Activated CD4-positive, alpha-beta memory T cell treated with anti-CD3 and anti-CD28 coated beads, Interleukin-2, amount 10 ng/mL, durations not matched to agents 7 days and 5 days (primary cell): ENCODE measurements at regions of chr9 and their contacts with region 1.

Region 1: GRCh38 chr9:108953983-108954574 is 19.9 kb downstream of the ABITRAM start:
- DNase-seq: no peak
- H3K4me3 Mint-ChIP-seq: no peak overlapping the region
- H3K27ac Mint-ChIP-seq: no peak overlapping the region
- H3K4me1 Mint-ChIP-seq: peaks cover 1% of the 10 kb centered on the region
- H3K27me3 Mint-ChIP-seq: no peaks in the 10 kb centered on the region

Region 2: DNA sequence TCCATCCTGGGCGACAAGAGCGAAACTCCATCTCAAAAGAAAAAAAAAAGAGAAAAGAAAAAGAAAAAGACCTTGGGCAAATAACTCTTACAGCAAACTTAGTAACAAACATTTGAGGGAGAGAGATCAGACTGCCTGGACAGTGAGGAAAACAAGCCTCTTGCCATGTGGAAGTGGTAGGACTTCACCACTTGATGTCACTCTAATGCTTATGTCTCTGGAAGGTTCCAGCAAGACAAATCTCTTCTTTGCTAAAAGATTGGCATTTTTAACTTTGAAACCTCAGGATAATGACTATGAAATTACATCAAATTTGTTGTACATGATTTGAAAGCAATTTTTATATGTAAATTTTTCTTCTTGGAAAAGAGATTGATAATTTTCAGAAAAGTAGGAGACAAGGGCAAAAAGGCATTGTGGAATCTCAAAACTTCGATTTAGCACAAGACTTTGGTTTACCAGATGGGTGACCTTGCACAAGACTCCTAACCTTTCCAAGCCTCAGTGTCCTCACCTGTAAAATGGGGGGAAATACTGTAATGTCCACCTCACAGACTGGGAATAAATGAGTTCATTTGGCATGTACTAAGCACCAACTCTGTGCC is 103.7 kb before region 1 on chr9:
- CTCF ChIA-PET with region 1: interaction called, 10 read pairs
- POLR2A ChIA-PET with region 1: no interaction called
- DNase-seq: no peak
- H3K4me3 Mint-ChIP-seq: no peak overlapping the region
- H3K27ac Mint-ChIP-seq: no peak overlapping the region
- H3K4me1 Mint-ChIP-seq: no peaks in the 10 kb centered on the region
- H3K27me3 Mint-ChIP-seq: peaks cover 5% of the 10 kb centered on the region

Region 3: GRCh38 chr9:109244157-109245132 is 290.4 kb after region 1 on chr9:
- CTCF ChIA-PET with region 1: no interaction called
- POLR2A ChIA-PET with region 1: no interaction called
- DNase-seq: peak; percentile 67
- H3K4me3 Mint-ChIP-seq: no peak overlapping the region
- H3K27ac Mint-ChIP-seq: no peak overlapping the region
- H3K4me1 Mint-ChIP-seq: no peaks in the 10 kb centered on the region
- H3K27me3 Mint-ChIP-seq: peaks cover 11% of the 10 kb centered on the region